Activated CD8-positive, alpha-beta T cell treated with anti-CD3 and anti-CD28 coated beads for 36 hours (primary cell): ENCODE measurements at regions of chr6 and their contacts with region 1.

Region 1: DNA sequence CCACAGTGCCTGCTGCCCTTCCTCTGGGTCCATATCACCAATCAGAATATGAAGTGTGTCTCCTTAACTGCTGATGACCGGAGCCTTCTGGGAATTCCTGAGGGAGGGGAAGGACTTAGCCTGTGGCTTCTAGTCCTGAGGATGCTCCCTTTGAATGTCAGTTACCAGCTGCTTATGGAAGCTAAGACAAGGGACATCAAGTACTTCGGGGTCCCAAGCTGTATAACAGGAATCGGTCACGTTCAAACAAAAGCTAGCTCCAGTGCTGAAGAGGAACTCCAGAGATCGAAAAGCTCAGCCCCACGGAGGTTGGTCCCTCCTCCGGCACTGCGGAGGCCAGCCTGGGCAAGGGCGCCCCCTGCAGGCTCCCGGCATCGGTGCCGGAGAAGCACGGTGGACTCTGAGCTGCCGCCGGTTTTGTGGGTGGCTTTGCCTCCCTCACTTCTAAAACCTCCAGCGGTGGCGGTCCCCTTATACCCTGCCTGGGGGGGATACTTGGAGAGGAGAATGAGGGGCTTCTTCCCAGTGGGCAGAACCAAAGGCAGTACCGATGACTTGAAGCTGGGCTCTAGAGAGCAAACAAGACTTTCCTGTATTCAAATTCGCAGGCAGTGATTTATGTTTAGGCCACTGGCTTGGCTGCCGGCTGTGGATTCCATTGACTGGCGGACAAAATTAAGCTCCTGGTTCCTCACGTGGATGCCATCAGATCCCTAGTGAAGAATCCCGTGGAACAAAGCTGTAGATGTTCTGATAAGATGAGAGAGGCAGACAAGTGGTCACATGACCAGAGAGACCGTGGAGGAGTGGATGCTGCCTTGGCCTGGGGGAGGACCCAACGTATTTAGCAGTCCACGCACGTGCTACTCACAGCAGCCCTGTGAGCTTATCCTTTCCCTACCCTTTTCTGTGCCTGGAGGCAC is 16.2 kb upstream of the UBR2 start:
- DNase-seq: peak; percentile 90
- ATAC-seq: peak; percentile 99
- H3K4me3 Mint-ChIP-seq: peak overlapping the region; percentile 64
- H3K27ac Mint-ChIP-seq: no peak overlapping the region
- H3K4me1 Mint-ChIP-seq: peaks cover 13% of the 10 kb centered on the region
- H3K27me3 Mint-ChIP-seq: peaks cover 10% of the 10 kb centered on the region
- CTCF ChIP-seq: peak; percentile 97

Region 2: GRCh38 chr6:42226645-42227143 is 321.0 kb before region 1 on chr6:
- CTCF ChIA-PET with region 1: interaction called, 21 read pairs
- POLR2A ChIA-PET with region 1: interaction called, 3 read pairs
- intact Hi-C with region 1: no loop called
- DNase-seq: no peak
- ATAC-seq: no peak
- H3K4me3 Mint-ChIP-seq: no peak overlapping the region
- H3K27ac Mint-ChIP-seq: no peak overlapping the region
- H3K4me1 Mint-ChIP-seq: peaks cover 10% of the 10 kb centered on the region
- H3K27me3 Mint-ChIP-seq: no peaks in the 10 kb centered on the region
- CTCF ChIP-seq: no peak

Region 3: DNA sequence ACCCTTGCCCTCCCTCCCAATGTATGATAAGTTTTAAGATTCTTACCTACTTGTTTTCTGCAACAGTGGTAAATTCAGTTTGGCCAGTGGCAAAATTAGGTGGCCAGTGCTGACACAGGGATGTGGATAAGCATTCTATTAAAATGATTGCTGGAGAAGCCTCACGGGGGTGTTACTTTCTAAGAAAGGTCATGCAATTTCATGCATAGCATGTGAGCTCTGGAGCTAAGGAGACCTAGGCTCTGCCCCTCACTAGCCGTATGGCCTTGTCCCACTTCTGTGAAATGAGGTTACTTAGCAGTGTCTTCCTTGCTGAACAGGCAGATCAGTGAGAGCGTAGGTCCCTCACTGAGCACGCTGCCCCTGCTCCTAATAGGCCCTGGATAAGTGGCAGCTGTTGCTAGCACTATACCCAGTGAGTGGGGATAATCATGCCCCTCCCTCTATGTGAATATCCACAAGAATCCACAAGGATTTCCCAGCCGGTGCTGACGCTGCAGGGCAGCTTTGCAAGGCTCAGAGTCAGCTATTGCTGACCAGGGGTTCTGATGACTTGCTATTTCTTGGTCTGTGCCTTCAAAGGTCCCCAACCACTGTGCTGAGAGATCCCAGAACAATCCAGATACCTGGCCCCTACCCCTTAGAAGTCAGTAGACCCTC is 243.5 kb before region 1 on chr6:
- CTCF ChIA-PET with region 1: interaction called, 38 read pairs
- POLR2A ChIA-PET with region 1: no interaction called
- intact Hi-C with region 1: no loop called
- DNase-seq: no peak
- ATAC-seq: no peak
- H3K4me3 Mint-ChIP-seq: no peak overlapping the region
- H3K27ac Mint-ChIP-seq: no peak overlapping the region
- H3K4me1 Mint-ChIP-seq: peaks cover 7% of the 10 kb centered on the region
- H3K27me3 Mint-ChIP-seq: no peaks in the 10 kb centered on the region
- CTCF ChIP-seq: no peak

Region 4: DNA sequence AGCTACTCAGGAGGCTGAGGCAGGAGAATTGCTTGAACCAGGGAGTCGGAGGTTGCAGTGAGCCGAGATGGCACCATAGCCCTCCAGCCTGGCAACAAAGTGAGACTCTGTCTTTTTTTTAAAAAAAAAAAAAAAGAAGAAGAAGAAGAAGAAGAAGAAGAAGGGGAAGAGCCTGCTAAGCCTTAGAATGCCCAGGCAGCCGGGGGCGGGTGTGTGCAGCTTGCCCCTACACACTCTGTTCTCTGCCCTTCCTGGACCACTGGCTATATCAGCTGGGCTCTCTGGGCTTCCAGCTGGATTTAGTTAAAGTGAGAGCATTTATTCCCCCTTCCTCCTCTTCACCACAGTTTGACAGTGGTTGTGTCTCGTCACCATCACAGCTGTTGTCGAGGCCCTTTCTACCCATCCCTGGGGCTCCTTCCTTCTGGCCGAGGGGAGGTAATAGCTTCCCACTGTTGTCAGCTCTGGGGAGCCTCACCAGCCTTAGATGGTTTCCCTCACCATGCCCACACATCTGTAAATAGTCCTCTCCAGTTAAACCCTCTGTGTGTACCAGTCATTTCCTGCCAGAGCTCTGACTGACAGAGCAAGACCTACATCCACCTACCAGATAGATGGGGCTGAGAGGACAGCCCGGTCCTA is 173.5 kb before region 1 on chr6:
- CTCF ChIA-PET with region 1: interaction called, 24 read pairs
- POLR2A ChIA-PET with region 1: no interaction called
- intact Hi-C with region 1: no loop called
- DNase-seq: peak; percentile 47
- ATAC-seq: peak; percentile 82
- H3K4me3 Mint-ChIP-seq: no peak overlapping the region
- H3K27ac Mint-ChIP-seq: peak overlapping the region; percentile 75
- H3K4me1 Mint-ChIP-seq: peaks cover 60% of the 10 kb centered on the region
- H3K27me3 Mint-ChIP-seq: no peaks in the 10 kb centered on the region
- CTCF ChIP-seq: no peak

Region 5: DNA sequence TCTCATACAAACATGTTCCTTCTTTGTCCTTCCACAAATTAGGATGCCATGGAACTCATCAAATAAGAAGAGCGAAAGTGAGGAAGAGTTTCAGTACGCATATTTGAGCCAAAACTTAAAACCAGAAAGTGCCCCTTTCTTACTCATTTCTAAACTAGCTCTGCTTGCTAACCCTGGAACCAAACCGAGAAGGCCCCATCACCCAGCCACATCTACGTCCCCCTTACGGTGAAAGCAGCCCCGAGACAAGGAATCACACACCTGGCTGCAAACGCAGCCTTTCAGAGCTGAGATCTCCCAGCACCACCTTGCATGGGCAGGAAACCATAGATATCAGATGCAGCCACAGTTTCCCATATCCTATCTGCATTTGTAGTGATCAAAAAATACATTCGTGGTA is 124.4 kb before region 1 on chr6:
- CTCF ChIA-PET with region 1: interaction called, 14 read pairs
- POLR2A ChIA-PET with region 1: no interaction called
- intact Hi-C with region 1: no loop called
- DNase-seq: peak; percentile 81
- ATAC-seq: peak; percentile 76
- H3K4me3 Mint-ChIP-seq: no peak overlapping the region
- H3K27ac Mint-ChIP-seq: no peak overlapping the region
- H3K4me1 Mint-ChIP-seq: peaks cover 63% of the 10 kb centered on the region
- H3K27me3 Mint-ChIP-seq: no peaks in the 10 kb centered on the region
- CTCF ChIP-seq: no peak

Region 6: DNA sequence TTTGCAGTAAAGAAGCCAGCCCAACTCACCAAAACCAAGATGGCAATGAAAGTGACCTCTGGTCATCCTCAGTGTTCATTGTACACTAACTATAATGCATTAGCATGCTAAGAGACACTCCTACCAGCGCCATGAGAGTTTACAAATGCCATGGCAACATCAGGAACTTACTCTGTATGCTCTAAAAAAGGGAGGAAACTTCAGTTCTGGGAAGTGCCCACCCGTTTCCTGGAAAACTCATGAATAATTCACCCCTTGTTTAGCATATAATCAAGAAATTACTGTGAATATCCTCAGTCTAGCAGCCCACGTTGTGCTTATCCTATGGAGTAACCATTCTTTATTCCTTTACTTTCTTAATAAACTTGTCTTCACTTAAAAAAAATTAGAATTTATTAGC is 76.5 kb before region 1 on chr6:
- CTCF ChIA-PET with region 1: interaction called, 13 read pairs
- POLR2A ChIA-PET with region 1: no interaction called
- intact Hi-C with region 1: no loop called
- DNase-seq: peak; percentile 23
- ATAC-seq: no peak
- H3K4me3 Mint-ChIP-seq: no peak overlapping the region
- H3K27ac Mint-ChIP-seq: no peak overlapping the region
- H3K4me1 Mint-ChIP-seq: no peaks in the 10 kb centered on the region
- H3K27me3 Mint-ChIP-seq: no peaks in the 10 kb centered on the region
- CTCF ChIP-seq: no peak

Region 7: GRCh38 chr6:42532038-42532669 is 15.5 kb before region 1 on chr6:
- CTCF ChIA-PET with region 1: interaction called, 62 read pairs
- POLR2A ChIA-PET with region 1: no interaction called
- intact Hi-C with region 1: no loop called
- DNase-seq: peak; percentile 25
- ATAC-seq: peak; percentile 75
- H3K4me3 Mint-ChIP-seq: no peak overlapping the region
- H3K27ac Mint-ChIP-seq: no peak overlapping the region
- H3K4me1 Mint-ChIP-seq: peaks cover 2% of the 10 kb centered on the region
- H3K27me3 Mint-ChIP-seq: no peaks in the 10 kb centered on the region
- CTCF ChIP-seq: peak; percentile 96

Region 8: DNA sequence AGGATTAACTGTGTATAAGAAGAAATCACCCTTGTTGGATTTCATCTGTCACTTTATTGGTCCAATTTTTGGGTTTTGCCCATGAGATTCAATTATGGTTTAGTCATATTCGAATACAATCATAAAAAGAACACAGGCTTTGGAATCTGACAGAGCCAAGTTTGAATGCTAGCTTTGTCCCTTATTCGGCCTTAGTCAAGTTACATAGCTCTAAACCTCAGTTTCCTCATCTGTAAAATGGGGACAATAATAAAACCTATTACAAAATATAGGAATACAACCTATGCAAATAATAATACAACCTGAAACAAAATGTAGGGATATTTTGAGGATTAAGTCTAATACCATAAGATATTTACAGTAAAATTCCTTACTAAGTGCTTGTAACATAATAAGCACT is 117.0 kb after region 1 on chr6:
- CTCF ChIA-PET with region 1: no interaction called
- POLR2A ChIA-PET with region 1: no interaction called
- intact Hi-C with region 1: no loop called
- DNase-seq: no peak
- ATAC-seq: no peak
- H3K4me3 Mint-ChIP-seq: no peak overlapping the region
- H3K27ac Mint-ChIP-seq: no peak overlapping the region
- H3K4me1 Mint-ChIP-seq: no peaks in the 10 kb centered on the region
- H3K27me3 Mint-ChIP-seq: no peaks in the 10 kb centered on the region
- CTCF ChIP-seq: no peak